Ascending aorta (tissue), 2 donors: ENCODE measurements at regions of chr5 and their contacts with region 1.

Region 1: GRCh38 chr5:14190194-14191164 is 47.3 kb downstream of the TRIO start:
- DNase-seq: peak in 1 of 2 donors; percentile 89
- H3K4me3 ChIP-seq: peak overlapping the region in 1 of 2 donors; percentile 46
- H3K27ac ChIP-seq: peak overlapping the region; percentile 95 to 99
- H3K4me1 ChIP-seq: peaks cover 29 to 66% of the 10 kb centered on the region in 2 donors
- H3K27me3 ChIP-seq: no peaks in the 10 kb centered on the region
- CTCF ChIP-seq: no peak

Region 2: DNA sequence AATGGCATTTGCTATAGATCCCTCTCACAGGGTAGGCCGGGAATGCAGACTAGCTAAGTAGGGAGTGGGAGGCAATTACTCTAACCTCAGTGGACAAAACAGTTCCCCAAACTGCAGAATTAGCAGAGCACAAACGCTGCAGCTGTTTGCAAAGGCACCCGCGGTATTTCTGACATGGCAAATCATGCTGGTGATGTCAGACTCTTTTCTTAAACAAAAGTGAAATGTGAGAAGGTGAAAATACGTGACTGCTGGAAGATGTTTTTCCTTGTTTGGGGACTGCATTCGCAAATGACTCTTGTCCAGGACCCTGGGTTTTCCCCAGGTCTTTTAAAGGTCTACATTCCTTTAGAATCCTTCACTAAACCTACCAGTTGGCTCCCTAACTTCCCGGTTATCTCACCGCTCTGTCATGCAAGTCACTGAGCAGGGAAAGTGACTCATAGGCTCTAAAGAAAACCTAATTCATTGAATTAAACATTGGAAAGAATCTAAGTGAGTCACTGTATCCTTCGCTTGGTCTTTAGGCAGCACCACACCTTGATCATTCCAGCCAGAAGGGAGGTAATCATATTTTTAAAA is 154.5 kb before region 1 on chr5:
- intact Hi-C with region 1: loop called (anchors 5 kb)
- DNase-seq: peak in 1 of 2 donors; percentile 76
- H3K4me3 ChIP-seq: peak overlapping the region in 1 of 2 donors; percentile 46
- H3K27ac ChIP-seq: peak overlapping the region; percentile 11 to 76
- H3K4me1 ChIP-seq: peaks cover 5 to 19% of the 10 kb centered on the region in 2 donors
- H3K27me3 ChIP-seq: no peaks in the 10 kb centered on the region
- CTCF ChIP-seq: no peak

Region 3: GRCh38 chr5:14142827-14143548 is 47.5 kb before region 1 on chr5 and contains the start of gene TRIO:
- intact Hi-C with region 1: loop called (anchors 2 kb)
- DNase-seq: peak; percentile 66 to 94
- H3K4me3 ChIP-seq: peak within 1 kb of the TSS; percentile 92 to 97
- H3K27ac ChIP-seq: peak within 1 kb of the TSS; percentile 93 to 98
- H3K4me1 ChIP-seq: peaks cover 0 to 29% of the 10 kb centered on the region in 2 donors
- H3K27me3 ChIP-seq: no peaks in the 10 kb centered on the region
- CTCF ChIP-seq: peak; percentile 23 to 68 (median 67)
- total RNA-seq, gene TRIO: 262 TPM

Region 4: DNA sequence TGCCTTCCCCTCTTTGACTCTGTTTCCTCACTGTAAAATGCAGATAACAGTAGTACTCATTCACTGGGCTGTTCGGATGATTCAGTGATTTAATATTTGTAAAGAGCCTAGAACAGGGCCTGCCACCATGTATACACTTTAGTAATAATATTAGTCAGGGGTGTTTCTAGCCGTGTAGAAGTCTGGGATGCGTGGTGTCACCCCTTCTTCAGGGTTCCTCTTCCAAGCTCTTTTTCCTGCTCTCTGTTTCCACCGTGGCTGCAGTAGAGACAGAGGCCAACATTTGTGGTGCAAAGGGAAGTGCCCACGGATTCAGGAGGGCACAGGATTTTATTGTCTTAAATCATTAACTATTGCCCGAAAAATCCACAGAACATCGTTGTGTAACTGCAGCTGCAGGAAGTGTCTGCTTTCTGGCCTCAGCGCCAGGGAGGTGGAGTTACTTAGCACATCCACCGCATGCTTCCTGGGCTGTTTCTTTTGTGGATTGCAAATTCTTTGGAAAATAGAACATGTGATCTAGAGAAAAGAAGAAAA is 14.4 kb after region 1 on chr5:
- intact Hi-C with region 1: loop called (anchors 2 kb)
- DNase-seq: peak in 1 of 2 donors; percentile 76
- H3K4me3 ChIP-seq: peak overlapping the region in 1 of 2 donors; percentile 16
- H3K27ac ChIP-seq: peak overlapping the region; percentile 37 to 57
- H3K4me1 ChIP-seq: peaks cover 4 to 39% of the 10 kb centered on the region in 2 donors
- H3K27me3 ChIP-seq: no peaks in the 10 kb centered on the region
- CTCF ChIP-seq: no peak

Region 5: GRCh38 chr5:14664302-14665100 is 474.0 kb after region 1 on chr5 and contains the start of gene OTULIN:
- intact Hi-C with region 1: loop called (anchors 10 kb)
- DNase-seq: peak; percentile 70 to 95
- H3K4me3 ChIP-seq: peak within 1 kb of the TSS; percentile 72 to 83
- H3K27ac ChIP-seq: peak within 1 kb of the TSS; percentile 93 to 97
- H3K4me1 ChIP-seq: peaks cover 5 to 30% of the 10 kb centered on the region in 2 donors
- H3K27me3 ChIP-seq: no peaks in the 10 kb centered on the region
- CTCF ChIP-seq: peak in 1 of 3 experiments; percentile 5
- total RNA-seq, gene OTULIN: 56.9 TPM